ENCODE measurements at regions of chr11 and their contacts with region 1.

Region 1: DNA sequence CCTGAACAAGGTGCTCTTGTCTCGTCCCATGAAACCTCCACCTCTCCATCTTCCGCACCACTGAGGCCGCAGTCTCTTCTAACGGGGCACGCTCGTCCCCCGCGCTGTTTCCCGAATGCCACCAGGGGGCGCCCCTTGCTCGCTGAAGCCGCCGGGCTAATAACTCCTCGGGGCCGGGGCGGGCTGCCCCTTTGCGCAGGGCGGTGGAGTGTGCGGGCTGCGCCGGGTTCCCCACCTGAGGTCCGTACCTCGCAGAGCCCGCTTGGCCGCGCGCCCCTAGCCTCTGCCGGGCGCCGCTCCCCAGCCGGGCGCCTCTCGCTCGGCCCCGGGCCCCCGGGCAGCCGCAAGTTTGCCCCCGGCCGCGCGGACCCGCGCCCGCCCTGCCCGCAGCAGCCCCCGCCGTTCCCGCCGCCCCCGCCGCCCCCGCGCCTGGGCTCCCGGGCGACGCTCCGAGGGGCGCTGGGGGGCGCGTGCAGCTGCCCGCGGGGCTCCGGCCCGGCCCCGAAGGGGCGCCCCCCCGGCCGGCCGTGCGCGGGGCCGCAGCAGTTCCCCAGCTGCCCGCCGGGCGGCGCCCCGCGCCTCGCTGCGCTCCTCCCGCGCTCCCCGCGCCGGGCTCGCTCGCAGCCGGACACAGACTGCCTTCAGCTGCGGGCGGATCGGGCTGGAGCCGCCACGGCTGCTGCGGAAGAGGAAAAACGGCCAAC is at the start of gene GRIK4:
- DNase-seq: no peak
- H3K4me3 ChIP-seq: peak within 1 kb of the TSS; percentile 38 to 65
- H3K27ac ChIP-seq: no peak within 1 kb of the TSS
- H3K4me1 ChIP-seq: peaks cover 4% of the 10 kb centered on the region
- H3K27me3 ChIP-seq: no peaks in the 10 kb centered on the region
- CTCF ChIP-seq: peak; percentile 88 to 92 (median 89)
- POLR2A ChIP-seq: no peak
- total RNA-seq, gene GRIK4: 0.25 TPM

Region 2: GRCh38 chr11:120432056-120433018 is 78.9 kb before region 1 on chr11:
- intact Hi-C with region 1: no loop called
- DNase-seq: no peak
- H3K4me3 ChIP-seq: no peak overlapping the region
- H3K27ac ChIP-seq: peak overlapping the region; percentile 74
- H3K4me1 ChIP-seq: peaks cover 19% of the 10 kb centered on the region
- H3K27me3 ChIP-seq: no peaks in the 10 kb centered on the region
- CTCF ChIP-seq: no peak
- POLR2A ChIP-seq: no peak

Region 3: GRCh38 chr11:120688163-120688562 is 176.9 kb after region 1 on chr11:
- intact Hi-C with region 1: loop called (anchors 5 kb)
- DNase-seq: no peak
- H3K4me3 ChIP-seq: no peak overlapping the region
- H3K27ac ChIP-seq: no peak overlapping the region
- H3K4me1 ChIP-seq: no peaks in the 10 kb centered on the region
- H3K27me3 ChIP-seq: no peaks in the 10 kb centered on the region
- CTCF ChIP-seq: no peak
- POLR2A ChIP-seq: no peak

Region 4: DNA sequence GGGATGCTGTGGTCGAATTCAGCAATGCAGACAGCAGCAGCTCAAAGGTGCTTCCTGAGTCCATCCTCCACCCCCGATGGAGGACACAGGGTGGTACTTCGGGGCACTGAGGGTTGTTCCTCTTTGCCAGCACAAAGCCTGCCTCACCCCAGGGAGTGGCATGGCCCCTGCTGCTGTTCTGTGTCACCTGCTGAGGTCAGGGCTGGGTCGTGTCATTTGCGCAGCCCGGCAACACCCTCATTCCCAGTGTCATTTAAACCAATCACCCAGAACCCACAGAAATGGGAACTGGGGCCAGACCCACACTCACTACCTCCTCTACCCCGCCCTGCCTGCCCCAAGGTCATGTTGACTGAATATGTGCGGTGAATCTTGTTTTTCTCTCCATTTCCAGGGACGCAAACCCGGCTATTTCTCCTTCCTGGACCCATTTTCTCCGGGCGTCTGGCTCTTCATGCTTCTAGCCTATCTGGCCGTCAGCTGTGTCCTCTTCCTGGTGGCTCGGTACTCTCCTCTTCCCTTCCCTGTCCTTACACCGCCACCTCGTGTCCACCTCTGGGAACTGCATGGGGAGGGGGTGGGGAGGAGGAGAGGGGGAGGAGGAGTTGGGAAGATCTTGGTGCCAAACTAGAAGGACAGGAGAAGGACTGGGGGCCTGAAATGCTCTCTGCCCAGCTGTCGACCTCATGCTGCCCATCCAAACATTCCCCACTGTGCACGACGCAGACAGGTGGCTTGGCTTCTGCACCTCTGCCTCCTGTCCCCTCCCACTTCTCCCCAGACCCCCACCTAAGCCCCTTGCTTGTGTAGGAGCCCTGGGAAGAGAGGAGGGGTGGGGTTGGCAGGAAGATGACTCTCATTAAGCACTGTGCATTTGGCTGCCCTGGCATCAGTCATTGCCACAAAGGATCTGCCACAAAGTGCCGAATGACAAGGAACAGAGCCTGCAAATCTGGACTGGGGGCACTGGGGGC is 441.5 kb after region 1 on chr11:
- intact Hi-C with region 1: loop called (anchors 10 kb)
- DNase-seq: no peak
- H3K4me3 ChIP-seq: no peak overlapping the region
- H3K27ac ChIP-seq: no peak overlapping the region
- H3K4me1 ChIP-seq: no peaks in the 10 kb centered on the region
- H3K27me3 ChIP-seq: no peaks in the 10 kb centered on the region
- CTCF ChIP-seq: peak; percentile 37 to 71 (median 46)
- POLR2A ChIP-seq: no peak

Region 5: GRCh38 chr11:121194731-121195596 is 683.7 kb after region 1 on chr11:
- intact Hi-C with region 1: loop called (anchors 10 kb)
- DNase-seq: no peak
- H3K4me3 ChIP-seq: no peak overlapping the region
- H3K27ac ChIP-seq: no peak overlapping the region
- H3K4me1 ChIP-seq: no peaks in the 10 kb centered on the region
- H3K27me3 ChIP-seq: no peaks in the 10 kb centered on the region
- CTCF ChIP-seq: peak; percentile 76 to 83 (median 78)
- POLR2A ChIP-seq: no peak

Measured in vagina (tissue), 2 donors.